Naive thymus-derived CD4-positive, alpha-beta T cell (primary cell): ENCODE measurements at regions of chr12 and their contacts with region 1.

Region 1: DNA sequence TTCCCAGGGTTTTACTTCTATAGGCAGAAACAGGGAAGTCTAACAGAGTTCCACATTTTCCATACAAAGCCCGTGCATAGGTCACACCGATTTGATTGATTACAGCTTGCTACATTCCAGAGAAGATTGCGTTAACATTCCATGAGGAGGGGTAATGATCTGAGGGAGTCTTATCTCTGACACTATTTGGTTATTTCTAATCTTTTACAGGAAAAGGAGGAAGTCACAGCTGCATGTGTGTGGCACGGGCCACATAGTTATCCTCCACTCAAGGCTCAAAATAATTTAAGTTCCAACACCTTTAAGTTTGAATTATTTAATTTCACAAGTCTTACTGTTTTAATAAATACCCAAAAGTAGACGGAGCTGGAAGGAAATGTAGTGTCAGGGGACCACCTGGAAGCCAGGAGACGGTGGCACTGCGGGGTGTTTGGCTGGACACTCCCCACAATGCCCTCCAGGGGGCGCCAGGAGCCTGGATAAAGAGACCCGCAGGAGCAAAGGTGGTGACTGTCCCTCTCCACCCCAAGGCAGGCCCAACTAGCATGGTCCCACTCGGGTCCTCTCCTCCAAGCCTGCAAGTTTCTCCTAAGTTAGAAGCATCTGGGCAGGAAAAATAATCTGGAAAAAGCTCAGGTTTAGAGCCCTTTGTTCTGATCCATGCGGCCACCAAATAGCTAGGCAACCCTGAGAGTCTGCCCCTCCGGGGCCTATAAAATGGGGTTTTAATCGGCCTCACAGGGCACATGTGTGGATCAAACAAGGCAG is 20.2 kb downstream of the KRT8 start:
- DNase-seq: peak; percentile 59 to 85 (median 76)
- ATAC-seq: peak; percentile 87
- H3K4me3 ChIP-seq: no peak overlapping the region
- H3K4me3 Mint-ChIP-seq: no peak overlapping the region
- H3K27ac ChIP-seq: no peak overlapping the region
- H3K27ac Mint-ChIP-seq: no peak overlapping the region
- H3K4me1 ChIP-seq: peaks cover 5 to 6% of the 10 kb centered on the region in 2 donors
- H3K4me1 Mint-ChIP-seq: peaks cover 0 to 7% (median 5%) of the 10 kb centered on the region in 7 donors
- H3K27me3 ChIP-seq: peaks cover 0 to 3% of the 10 kb centered on the region in 2 donors
- H3K27me3 Mint-ChIP-seq: peaks cover 0 to 22% (median 8%) of the 10 kb centered on the region in 5 donors

Region 2: DNA sequence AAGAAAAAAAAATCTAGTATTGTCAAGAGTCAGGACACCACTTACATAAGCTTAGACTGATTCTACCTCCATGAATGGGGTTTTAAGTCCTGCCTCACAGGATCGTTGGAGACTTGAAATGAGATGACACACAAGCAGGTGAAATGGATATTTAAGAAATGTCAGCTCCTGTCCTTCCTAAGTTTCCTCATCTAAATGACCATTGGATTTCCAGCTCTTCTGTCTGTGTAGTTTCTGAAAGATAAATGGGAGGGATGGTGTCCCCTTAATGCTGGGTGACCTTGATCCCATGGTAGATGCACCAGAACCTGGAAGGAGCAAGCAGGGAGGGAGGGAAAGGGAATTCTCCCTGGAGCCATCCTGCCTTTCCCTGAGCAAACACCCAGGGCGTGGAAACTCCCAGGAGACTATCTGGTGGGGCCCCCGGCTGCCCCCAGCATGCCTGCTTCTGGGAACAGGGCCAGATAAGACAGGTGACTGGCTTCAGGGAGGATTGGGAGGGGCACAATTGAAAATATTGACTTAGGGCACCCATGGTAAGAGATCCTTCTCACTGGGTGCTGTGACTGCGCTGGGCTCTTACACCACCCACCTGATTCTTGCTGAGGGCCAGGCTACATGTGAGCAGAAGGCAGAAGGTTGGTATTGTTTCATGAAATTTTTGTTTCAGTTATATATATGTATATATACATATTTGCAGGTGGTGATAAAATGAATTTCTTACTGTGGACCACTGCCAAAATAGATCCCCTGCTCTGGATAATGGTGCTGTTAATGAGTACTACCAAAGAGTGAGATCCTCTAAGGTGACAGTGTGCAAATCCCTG is 10.6 kb after region 1 on chr12:
- CTCF ChIA-PET with region 1: interaction called, 21 read pairs
- POLR2A ChIA-PET with region 1: no interaction called
- intact Hi-C with region 1: no loop called
- DNase-seq: no peak
- ATAC-seq: no peak
- H3K4me3 ChIP-seq: no peak overlapping the region
- H3K4me3 Mint-ChIP-seq: no peak overlapping the region
- H3K27ac ChIP-seq: no peak overlapping the region
- H3K27ac Mint-ChIP-seq: peak overlapping the region in 1 of 9 donors; percentile 8
- H3K4me1 ChIP-seq: no peaks in the 10 kb centered on the region
- H3K4me1 Mint-ChIP-seq: no peaks in the 10 kb centered on the region
- H3K27me3 ChIP-seq: no peaks in the 10 kb centered on the region
- H3K27me3 Mint-ChIP-seq: peaks cover 0 to 10% (median 0%) of the 10 kb centered on the region in 5 donors

Region 3: GRCh38 chr12:52949413-52950331 is 65.0 kb after region 1 on chr12:
- CTCF ChIA-PET with region 1: interaction called, 18 read pairs
- POLR2A ChIA-PET with region 1: no interaction called
- intact Hi-C with region 1: loop called in 1 of 2 experiments (anchors 2 kb)
- DNase-seq: no peak
- ATAC-seq: no peak
- H3K4me3 ChIP-seq: peak overlapping the region; percentile 56
- H3K4me3 Mint-ChIP-seq: peak overlapping the region; percentile 39 to 90 (median 82)
- H3K27ac ChIP-seq: peak overlapping the region; percentile 67
- H3K27ac Mint-ChIP-seq: peak overlapping the region in 7 of 9 donors; percentile 69 to 92 (median 76)
- H3K4me1 ChIP-seq: peaks cover 0 to 5% of the 10 kb centered on the region in 2 donors
- H3K4me1 Mint-ChIP-seq: peaks cover 2 to 18% (median 6%) of the 10 kb centered on the region in 7 donors
- H3K27me3 ChIP-seq: no peaks in the 10 kb centered on the region
- H3K27me3 Mint-ChIP-seq: peaks cover 0 to 13% (median 0%) of the 10 kb centered on the region in 5 donors

Region 4: DNA sequence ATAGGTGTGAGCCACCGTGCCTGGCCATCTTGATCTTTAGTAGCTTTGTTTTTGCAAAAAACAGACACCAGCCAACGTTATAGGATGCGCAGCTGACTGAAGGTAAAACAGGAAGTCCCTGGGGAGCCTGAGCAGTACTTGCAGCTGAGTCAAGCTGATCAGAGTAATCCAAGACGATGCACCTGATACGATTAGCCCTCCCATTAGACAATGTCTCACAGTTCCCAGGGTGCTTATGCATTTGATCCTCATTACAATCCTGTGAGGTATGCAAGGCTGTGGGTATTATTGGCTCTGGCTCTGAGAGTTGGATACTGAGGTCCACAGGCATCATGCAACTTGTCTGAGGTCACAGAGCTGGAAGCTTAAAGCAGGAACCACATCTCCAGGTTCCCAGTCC is 72.3 kb after region 1 on chr12:
- CTCF ChIA-PET with region 1: interaction called, 12 read pairs
- POLR2A ChIA-PET with region 1: no interaction called
- intact Hi-C with region 1: no loop called
- DNase-seq: peak in 3 of 9 donors; percentile 18 to 28 (median 23)
- ATAC-seq: peak; percentile 38
- H3K4me3 ChIP-seq: no peak overlapping the region
- H3K4me3 Mint-ChIP-seq: no peak overlapping the region
- H3K27ac ChIP-seq: no peak overlapping the region
- H3K27ac Mint-ChIP-seq: peak overlapping the region in 6 of 9 donors; percentile 28 to 79 (median 40)
- H3K4me1 ChIP-seq: peaks cover 0 to 6% of the 10 kb centered on the region in 2 donors
- H3K4me1 Mint-ChIP-seq: peaks cover 0 to 7% (median 5%) of the 10 kb centered on the region in 7 donors
- H3K27me3 ChIP-seq: no peaks in the 10 kb centered on the region
- H3K27me3 Mint-ChIP-seq: peaks cover 0 to 3% (median 0%) of the 10 kb centered on the region in 5 donors